ENCODE measurements at regions of chr6 and their contacts with region 1.

Region 1: GRCh38 chr6:43506667-43507471 is 3.3 kb downstream of the LRRC73 start:
- DNase-seq: peak; percentile 33
- H3K4me3 ChIP-seq: no peak overlapping the region
- CTCF ChIP-seq: peak; percentile 92

Region 2: GRCh38 chr6:43035495-43036194 is 471.2 kb before region 1 on chr6:
- CTCF ChIA-PET with region 1: no interaction called
- POLR2A ChIA-PET with region 1: no interaction called
- DNase-seq: no peak
- H3K4me3 ChIP-seq: no peak overlapping the region
- CTCF ChIP-seq: no peak

Region 3: GRCh38 chr6:43263314-43264178 is 243.3 kb before region 1 on chr6:
- CTCF ChIA-PET with region 1: interaction called, 21 read pairs
- POLR2A ChIA-PET with region 1: no interaction called
- DNase-seq: no peak
- H3K4me3 ChIP-seq: no peak overlapping the region
- CTCF ChIP-seq: peak; percentile 96

Region 4: GRCh38 chr6:43427406-43428111 is 79.3 kb before region 1 on chr6 and contains the start of gene ABCC10:
- CTCF ChIA-PET with region 1: interaction called, 16 read pairs
- POLR2A ChIA-PET with region 1: interaction called, 3 read pairs
- DNase-seq: peak; percentile 69
- H3K4me3 ChIP-seq: peak within 1 kb of the TSS; percentile 96
- CTCF ChIP-seq: peak; percentile 12

Region 5: DNA sequence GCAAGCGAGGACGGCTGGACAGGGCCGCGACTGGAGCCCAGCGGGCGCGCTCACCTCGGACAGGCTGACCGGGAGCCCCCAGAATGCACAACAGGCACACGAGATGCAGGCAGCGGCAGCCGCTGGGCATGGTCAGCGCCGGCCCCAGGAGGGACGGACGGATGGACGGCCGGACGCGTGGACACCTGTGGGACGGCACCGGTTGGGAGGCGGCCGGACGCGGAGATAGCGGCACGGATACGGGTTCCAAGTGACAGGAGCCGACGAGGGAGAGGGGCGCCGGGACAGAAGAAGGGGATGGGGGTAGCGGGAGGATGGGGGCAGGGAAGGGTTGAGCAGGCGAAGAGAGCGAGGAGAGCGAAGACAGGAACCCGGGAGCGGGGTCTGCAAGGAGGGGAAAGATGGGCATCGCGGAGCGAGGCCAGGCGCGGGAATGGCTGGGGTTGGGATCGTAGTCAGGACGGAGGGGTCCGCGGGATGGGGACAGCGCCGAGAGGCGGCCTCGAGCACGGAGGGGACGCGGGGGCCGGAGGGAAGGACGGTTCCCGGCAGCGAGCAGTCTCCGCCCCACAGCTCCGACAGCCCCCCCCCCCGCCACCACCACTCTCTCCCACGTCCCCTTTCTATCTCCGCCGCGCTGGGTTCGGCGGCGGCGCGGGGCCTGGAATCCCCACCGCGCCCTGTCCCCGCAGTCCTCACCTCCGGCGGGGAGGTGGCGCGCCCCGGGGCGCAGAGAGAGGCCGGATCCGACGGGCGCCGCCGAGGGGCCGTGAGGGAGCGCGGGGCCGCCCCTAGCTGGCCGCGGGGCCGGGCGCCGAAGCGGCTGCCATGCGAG is 52.0 kb before region 1 on chr6:
- CTCF ChIA-PET with region 1: interaction called, 169 read pairs
- POLR2A ChIA-PET with region 1: interaction called, 4 read pairs
- DNase-seq: no peak
- H3K4me3 ChIP-seq: peak overlapping the region; percentile 63
- CTCF ChIP-seq: no peak

Region 6: GRCh38 chr6:43477235-43478007 is 29.4 kb before region 1 on chr6 and contains the start of gene TJAP1:
- CTCF ChIA-PET with region 1: interaction called, 27 read pairs
- POLR2A ChIA-PET with region 1: no interaction called
- DNase-seq: no peak
- H3K4me3 ChIP-seq: peak within 1 kb of the TSS; percentile 74
- CTCF ChIP-seq: no peak

Region 7: DNA sequence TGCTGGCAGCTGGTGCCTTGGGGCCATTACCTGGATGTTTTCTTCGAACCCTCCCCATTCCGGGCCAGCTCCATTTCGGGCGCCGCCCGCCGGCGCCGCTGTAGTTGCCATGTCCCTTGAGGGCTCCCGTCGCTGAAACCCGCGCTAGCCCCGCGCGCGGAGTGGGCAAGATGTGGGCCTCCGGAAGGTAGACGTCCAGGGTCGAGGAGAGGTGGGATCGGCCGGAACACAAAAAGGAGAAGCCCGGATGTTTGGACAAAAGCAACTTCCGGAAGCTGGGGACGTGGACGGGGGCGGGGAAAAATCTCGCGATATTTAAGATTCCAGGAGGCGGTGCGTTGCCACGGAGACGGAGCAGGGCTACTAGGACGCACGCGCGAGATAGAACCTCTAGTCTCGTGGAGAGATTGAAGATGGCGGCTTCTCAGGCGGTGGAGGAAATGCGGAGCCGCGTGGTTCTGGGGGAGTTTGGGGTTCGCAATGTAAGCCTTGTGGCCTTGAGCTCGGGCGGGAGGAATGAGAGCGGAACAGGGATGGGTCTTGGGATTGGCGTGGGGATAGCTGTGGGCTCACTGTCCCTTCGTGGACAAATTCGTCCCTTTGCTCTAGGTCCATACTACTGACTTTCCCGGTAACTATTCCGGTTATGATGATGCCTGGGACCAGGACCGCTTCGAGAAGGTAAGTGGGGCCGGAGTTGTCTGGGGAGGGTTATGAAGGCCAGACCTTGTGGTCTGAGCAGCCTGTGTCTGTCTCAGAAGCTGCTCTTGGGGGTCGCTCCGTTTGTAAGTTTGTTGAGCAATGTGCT is 10.0 kb after region 1 on chr6 and contains the starts of genes POLR1C and YIPF3:
- CTCF ChIA-PET with region 1: interaction called, 47 read pairs
- POLR2A ChIA-PET with region 1: interaction called, 4 read pairs
- DNase-seq: peak; percentile 81
- H3K4me3 ChIP-seq: peak within 1 kb of the TSS; percentile 100
- CTCF ChIP-seq: no peak

Measured in AG04449 (cell line).